CD4-positive, alpha-beta T cell (primary cell): ENCODE measurements at regions of chr16 and their contacts with region 1.

Region 1: DNA sequence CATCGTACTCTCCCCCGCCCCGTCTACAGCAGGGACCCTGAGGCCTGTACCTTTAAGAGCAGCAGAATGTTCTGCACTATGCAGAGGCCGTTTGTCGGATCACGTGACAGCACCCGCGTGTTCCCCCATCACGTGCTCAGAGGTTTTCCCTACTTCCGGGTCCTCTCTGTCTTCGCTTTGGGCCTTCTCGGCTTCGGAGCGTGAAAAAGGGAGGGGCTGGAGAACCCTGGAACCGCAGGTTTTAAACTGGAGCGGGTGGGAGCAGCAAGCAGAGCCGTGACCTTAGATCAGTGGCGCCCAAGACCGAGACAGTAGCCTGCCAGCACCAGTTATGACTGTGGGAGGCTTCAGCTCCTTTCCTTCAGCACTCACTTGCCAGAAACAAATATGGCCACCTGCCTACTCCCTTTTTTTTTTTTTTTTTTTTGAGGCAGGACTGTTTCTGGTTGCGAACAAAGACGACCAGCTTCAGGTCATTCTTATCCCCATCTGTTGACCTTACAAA is at the start of gene CLN3:
- DNase-seq: peak; percentile 75 to 95 (median 82)
- ATAC-seq: peak; percentile 56
- H3K4me3 ChIP-seq: peak within 1 kb of the TSS; percentile 78
- H3K4me3 Mint-ChIP-seq: peak within 1 kb of the TSS; percentile 92
- H3K27ac ChIP-seq: peak within 1 kb of the TSS; percentile 90 to 97
- H3K27ac Mint-ChIP-seq: peak within 1 kb of the TSS; percentile 99
- H3K4me1 ChIP-seq: peaks cover 86% of the 10 kb centered on the region
- H3K4me1 Mint-ChIP-seq: peaks cover 65% of the 10 kb centered on the region
- H3K27me3 ChIP-seq: no peaks in the 10 kb centered on the region
- H3K27me3 Mint-ChIP-seq: no peaks in the 10 kb centered on the region
- CTCF ChIP-seq: no peak
- total RNA-seq, gene CLN3: 42.7 to 46.3 TPM

Region 2: GRCh38 chr16:27906883-27907282 is 585.1 kb before region 1 on chr16:
- CTCF ChIA-PET with region 1: no interaction called
- POLR2A ChIA-PET with region 1: no interaction called
- intact Hi-C with region 1: no loop called
- DNase-seq: no peak
- ATAC-seq: no peak
- H3K4me3 ChIP-seq: no peak overlapping the region
- H3K4me3 Mint-ChIP-seq: no peak overlapping the region
- H3K27ac ChIP-seq: no peak overlapping the region
- H3K27ac Mint-ChIP-seq: no peak overlapping the region
- H3K4me1 ChIP-seq: no peaks in the 10 kb centered on the region
- H3K4me1 Mint-ChIP-seq: no peaks in the 10 kb centered on the region
- H3K27me3 ChIP-seq: peaks cover 0 to 3% of the 10 kb centered on the region in 2 experiments
- H3K27me3 Mint-ChIP-seq: peaks cover 20% of the 10 kb centered on the region
- CTCF ChIP-seq: no peak

Region 3: DNA sequence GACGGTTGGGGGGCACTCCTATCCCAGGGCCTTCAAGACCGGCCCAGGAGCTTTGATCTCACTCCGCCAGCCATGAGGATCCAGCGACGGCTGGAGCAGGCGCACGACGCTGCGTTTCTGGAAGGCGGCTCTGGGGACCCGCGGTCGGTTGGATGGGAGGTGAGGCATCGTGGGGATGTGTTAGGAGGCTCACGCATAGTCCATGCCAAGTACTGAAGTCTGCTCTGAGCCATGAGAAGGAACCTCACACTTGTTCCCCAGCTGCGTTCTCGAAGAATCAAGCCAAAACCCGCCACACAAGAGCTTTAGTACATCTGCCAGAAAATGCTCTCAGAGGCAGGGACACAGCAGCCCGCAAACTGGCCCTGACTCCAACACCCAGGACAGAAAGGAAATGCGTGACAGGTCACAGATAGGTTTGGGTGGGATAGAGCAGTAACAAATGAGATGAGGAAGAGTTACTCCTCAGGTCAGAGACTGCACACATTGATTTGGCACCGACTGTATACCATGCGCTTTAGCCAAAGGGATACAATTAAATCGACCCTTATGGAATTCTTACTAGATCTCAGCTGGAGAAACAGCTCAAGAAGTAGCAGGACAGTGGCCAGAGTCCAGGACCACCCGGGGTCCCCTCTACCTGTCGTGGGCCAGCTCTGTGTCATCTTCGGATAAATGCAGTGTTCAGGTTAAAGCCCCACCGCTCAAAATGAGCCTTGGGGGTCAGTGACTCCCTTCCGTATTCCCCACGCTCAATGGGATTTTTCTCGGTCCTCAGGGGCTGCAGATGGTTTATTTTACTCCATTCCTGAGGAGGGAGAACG is 421.8 kb before region 1 on chr16:
- CTCF ChIA-PET with region 1: no interaction called
- POLR2A ChIA-PET with region 1: no interaction called
- intact Hi-C with region 1: no loop called
- DNase-seq: no peak
- ATAC-seq: no peak
- H3K4me3 ChIP-seq: no peak overlapping the region
- H3K4me3 Mint-ChIP-seq: no peak overlapping the region
- H3K27ac ChIP-seq: no peak overlapping the region
- H3K27ac Mint-ChIP-seq: no peak overlapping the region
- H3K4me1 ChIP-seq: no peaks in the 10 kb centered on the region
- H3K4me1 Mint-ChIP-seq: no peaks in the 10 kb centered on the region
- H3K27me3 ChIP-seq: no peaks in the 10 kb centered on the region
- H3K27me3 Mint-ChIP-seq: peaks cover 13% of the 10 kb centered on the region
- CTCF ChIP-seq: no peak

Region 4: DNA sequence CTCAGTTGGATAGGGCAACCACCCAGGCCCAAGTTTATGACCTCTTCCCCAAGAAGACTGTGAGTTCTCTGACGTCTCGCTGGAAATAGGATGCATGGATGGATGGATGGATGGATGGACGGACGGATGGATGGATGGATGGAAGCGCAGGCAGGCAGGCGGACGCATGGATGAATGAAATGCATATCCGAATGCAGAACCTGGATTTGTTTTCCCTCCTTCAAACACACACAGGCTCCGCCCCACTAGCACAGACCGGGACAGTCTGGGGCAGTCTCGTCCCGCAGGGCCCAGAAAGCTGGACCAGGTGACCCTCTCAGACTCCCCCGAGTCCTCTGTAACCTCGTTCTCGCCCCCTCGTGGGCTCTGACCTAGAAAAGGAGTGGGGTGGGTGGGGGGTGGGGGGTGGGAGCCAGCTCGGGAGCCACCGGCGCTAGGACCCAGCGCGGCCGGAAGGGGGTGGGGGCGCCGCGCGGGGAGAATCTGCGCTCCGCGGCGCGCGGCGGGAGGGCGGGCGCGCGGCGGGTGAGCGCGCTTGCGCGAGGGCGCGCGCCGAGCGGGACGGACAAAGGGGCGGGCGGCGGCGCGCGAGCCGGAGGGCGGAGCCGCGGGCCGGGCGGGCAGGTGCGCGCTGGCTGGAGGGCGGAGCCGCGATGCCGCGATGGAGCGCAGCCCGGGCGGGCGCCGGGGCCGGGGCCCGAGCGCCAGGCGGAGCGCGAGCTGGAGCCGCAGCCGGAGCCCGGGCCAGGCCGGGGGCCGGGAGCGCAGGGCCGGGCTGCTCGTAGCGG is 200.0 kb before region 1 on chr16 and contains the start of gene SBK1:
- CTCF ChIA-PET with region 1: no interaction called
- POLR2A ChIA-PET with region 1: interaction called, 4 read pairs
- intact Hi-C with region 1: loop called (anchors 5 kb)
- DNase-seq: peak; percentile 71 to 96 (median 84)
- ATAC-seq: peak; percentile 91
- H3K4me3 ChIP-seq: peak within 1 kb of the TSS; percentile 97
- H3K4me3 Mint-ChIP-seq: peak within 1 kb of the TSS; percentile 95
- H3K27ac ChIP-seq: peak within 1 kb of the TSS in 1 of 2 donors; percentile 67
- H3K27ac Mint-ChIP-seq: peak within 1 kb of the TSS; percentile 86
- H3K4me1 ChIP-seq: peaks cover 70% of the 10 kb centered on the region
- H3K4me1 Mint-ChIP-seq: peaks cover 70% of the 10 kb centered on the region
- H3K27me3 ChIP-seq: no peaks in the 10 kb centered on the region
- H3K27me3 Mint-ChIP-seq: no peaks in the 10 kb centered on the region
- CTCF ChIP-seq: no peak
- total RNA-seq, gene SBK1: 13.0 to 13.5 TPM

Region 5: DNA sequence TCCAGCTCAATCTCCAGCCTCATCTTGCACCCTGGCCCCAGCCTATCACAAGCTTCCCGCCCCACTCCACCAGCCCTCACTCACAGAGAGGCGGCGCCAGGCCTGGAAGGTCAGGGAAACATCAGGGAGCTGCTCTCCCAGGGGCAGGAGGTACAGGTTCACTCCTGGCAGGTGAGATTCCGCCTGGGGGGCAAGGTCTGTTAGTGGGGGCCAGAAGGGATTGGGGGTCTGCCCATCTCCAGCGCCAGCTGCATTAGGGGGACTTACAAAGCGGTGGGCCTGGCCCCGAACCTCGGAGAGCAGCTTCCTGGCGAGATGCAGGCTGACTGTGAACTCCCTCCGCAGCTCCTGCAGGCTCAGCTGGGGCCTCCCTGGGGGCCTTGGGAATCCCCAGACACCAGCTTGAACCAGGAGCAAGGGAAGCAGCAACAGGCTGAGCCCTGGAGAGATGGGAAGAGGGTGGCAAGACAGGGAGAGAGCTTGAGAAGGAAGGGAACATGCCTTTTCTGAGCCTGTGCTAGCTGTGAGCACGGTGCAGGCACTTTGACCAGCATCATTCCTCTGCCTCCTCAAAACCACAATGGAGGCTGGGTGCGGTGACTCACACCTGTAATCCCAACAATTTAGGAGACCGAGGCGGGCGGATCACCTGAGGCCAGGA is 11.7 kb after region 1 on chr16:
- CTCF ChIA-PET with region 1: no interaction called
- POLR2A ChIA-PET with region 1: interaction called, 14 read pairs
- intact Hi-C with region 1: no loop called
- DNase-seq: no peak
- ATAC-seq: no peak
- H3K4me3 ChIP-seq: no peak overlapping the region
- H3K4me3 Mint-ChIP-seq: no peak overlapping the region
- H3K27ac ChIP-seq: no peak overlapping the region
- H3K27ac Mint-ChIP-seq: no peak overlapping the region
- H3K4me1 ChIP-seq: peaks cover 17% of the 10 kb centered on the region
- H3K4me1 Mint-ChIP-seq: peaks cover 10% of the 10 kb centered on the region
- H3K27me3 ChIP-seq: no peaks in the 10 kb centered on the region
- H3K27me3 Mint-ChIP-seq: no peaks in the 10 kb centered on the region
- CTCF ChIP-seq: no peak

Region 6: DNA sequence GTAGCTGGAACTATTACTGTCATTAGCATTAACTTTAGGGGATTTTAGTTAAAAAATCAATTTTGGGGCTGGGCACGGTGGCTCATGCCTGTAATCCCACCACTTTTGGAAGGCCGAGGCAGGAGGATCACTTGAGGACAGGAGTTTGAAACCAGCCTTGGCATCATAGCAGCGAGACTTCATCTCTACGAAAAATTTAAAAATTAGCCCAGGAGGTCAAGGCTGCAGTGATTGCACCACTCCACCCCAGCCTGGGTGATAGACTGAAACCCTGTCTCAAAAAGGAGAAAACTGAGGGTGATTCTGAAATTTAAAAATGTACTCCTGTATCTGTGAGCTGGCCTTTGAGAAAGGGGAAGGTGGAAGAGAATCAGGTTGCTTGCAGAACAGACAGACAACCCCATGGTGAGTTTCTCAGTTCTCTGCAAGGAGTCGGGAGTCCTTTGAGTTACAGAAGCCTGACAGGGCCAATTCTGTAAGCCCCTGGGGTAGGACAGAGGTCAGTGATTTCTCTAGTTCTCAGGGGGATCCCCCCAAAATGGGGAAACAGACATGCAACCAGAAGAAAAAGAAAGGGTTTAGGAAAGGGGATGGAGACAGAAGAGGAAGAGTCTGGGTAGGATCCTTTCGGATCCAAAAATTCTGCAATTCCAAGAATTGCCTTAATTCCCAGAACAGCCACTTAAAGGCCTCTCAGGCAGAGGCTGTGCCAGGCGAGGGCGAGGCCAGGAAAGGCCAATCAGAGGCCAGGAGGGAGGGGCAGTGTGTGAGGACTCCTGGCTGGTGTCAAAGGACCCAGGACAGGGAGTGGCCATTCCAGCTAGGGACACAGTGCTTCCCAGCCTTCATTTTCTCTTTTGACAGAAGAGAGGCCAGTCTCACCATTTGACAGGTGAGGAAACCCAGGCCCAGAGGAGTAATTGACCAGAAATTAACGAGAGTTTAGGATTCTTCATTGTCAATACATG is 40.0 kb after region 1 on chr16:
- CTCF ChIA-PET with region 1: no interaction called
- POLR2A ChIA-PET with region 1: interaction called, 69 read pairs
- intact Hi-C with region 1: loop called in 1 of 2 experiments (anchors 5 kb)
- DNase-seq: no peak
- ATAC-seq: no peak
- H3K4me3 ChIP-seq: no peak overlapping the region
- H3K4me3 Mint-ChIP-seq: peak overlapping the region; percentile 45
- H3K27ac ChIP-seq: no peak overlapping the region
- H3K27ac Mint-ChIP-seq: peak overlapping the region; percentile 33
- H3K4me1 ChIP-seq: peaks cover 35% of the 10 kb centered on the region
- H3K4me1 Mint-ChIP-seq: peaks cover 42% of the 10 kb centered on the region
- H3K27me3 ChIP-seq: no peaks in the 10 kb centered on the region
- H3K27me3 Mint-ChIP-seq: no peaks in the 10 kb centered on the region
- CTCF ChIP-seq: no peak

Region 7: GRCh38 chr16:28543072-28543471 is 51.0 kb after region 1 on chr16:
- CTCF ChIA-PET with region 1: no interaction called
- POLR2A ChIA-PET with region 1: interaction called, 14 read pairs
- intact Hi-C with region 1: loop called in 1 of 2 experiments (anchors 2 kb)
- DNase-seq: peak in 3 of 14 experiments; percentile 34 to 54 (median 50)
- ATAC-seq: peak; percentile 51
- H3K4me3 ChIP-seq: no peak overlapping the region
- H3K4me3 Mint-ChIP-seq: no peak overlapping the region
- H3K27ac ChIP-seq: no peak overlapping the region
- H3K27ac Mint-ChIP-seq: peak overlapping the region; percentile 54
- H3K4me1 ChIP-seq: peaks cover 3% of the 10 kb centered on the region
- H3K4me1 Mint-ChIP-seq: peaks cover 11% of the 10 kb centered on the region
- H3K27me3 ChIP-seq: no peaks in the 10 kb centered on the region
- H3K27me3 Mint-ChIP-seq: no peaks in the 10 kb centered on the region
- CTCF ChIP-seq: no peak

Region 8: GRCh38 chr16:28553776-28554633 is 62.0 kb after region 1 on chr16 and contains the start of gene SGF29:
- CTCF ChIA-PET with region 1: interaction called, 5 read pairs
- POLR2A ChIA-PET with region 1: interaction called, 29 read pairs
- intact Hi-C with region 1: loop called (anchors 1 to 2 kb)
- DNase-seq: peak; percentile 89 to 98 (median 93)
- ATAC-seq: peak; percentile 86
- H3K4me3 ChIP-seq: peak within 1 kb of the TSS; percentile 84
- H3K4me3 Mint-ChIP-seq: peak within 1 kb of the TSS; percentile 94
- H3K27ac ChIP-seq: peak within 1 kb of the TSS; percentile 90 to 98
- H3K27ac Mint-ChIP-seq: peak within 1 kb of the TSS; percentile 97
- H3K4me1 ChIP-seq: peaks cover 42% of the 10 kb centered on the region
- H3K4me1 Mint-ChIP-seq: peaks cover 43% of the 10 kb centered on the region
- H3K27me3 ChIP-seq: no peaks in the 10 kb centered on the region
- H3K27me3 Mint-ChIP-seq: no peaks in the 10 kb centered on the region
- CTCF ChIP-seq: peak; percentile 34
- total RNA-seq, gene SGF29: 38.9 to 40.3 TPM